ENCODE measurements at regions of chr6 and their contacts with region 1.

Region 1: DNA sequence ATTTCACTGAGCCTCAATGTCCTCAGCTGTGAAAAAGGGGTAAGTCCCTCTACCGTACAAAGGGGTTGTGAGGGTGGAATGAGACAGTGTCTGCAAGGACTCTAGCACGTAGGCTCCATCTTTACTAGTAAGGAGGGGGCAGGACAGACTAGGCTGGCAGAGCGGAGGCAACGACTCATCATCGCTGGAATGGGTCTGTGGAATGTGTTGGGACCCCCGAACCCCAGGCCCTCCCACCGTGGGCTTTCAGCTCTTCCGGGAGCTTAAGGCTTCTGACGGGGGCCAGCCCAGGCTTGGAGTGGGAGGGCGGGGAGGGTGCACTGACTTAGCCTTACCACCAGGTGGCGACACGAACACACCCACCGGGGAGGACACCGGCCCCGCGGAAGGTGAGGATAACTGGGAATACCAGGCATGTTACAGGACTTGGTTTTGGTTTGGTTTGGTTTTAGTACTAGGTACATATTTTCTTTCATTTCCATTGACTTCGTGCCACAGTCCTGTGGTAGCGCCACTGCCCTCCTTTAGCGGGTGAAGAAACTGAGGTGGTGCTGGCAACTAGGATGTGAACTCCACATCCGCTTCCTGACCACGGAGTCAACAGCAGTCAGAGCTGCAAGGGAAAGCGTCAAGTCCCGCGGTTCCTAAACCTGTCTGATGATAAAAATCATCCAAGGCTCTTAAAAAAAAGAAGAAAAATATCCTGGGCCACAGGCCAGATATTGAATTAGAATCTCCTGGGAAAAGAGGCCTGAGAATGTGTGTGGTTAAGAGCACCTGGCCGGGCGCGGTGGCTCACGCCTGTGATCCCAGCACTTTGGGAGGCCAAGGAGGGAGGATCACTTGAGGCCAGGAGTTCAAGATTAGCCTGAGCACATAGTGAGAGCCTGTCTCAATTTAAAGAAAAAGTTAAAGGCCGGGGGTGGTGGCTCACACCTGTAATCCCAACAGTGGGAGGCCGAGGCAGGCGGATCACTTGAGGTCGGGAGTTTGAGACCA is 10.3 kb upstream of the TULP1 start:
- DNase-seq: peak; percentile 59
- H3K4me3 ChIP-seq: peak overlapping the region in 1 of 3 experiments; percentile 21
- H3K27ac ChIP-seq: no peak overlapping the region
- H3K4me1 ChIP-seq: peaks cover 9% of the 10 kb centered on the region
- H3K27me3 ChIP-seq: no peaks in the 10 kb centered on the region
- CTCF ChIP-seq: peak; percentile 73 to 94

Region 2: GRCh38 chr6:35202066-35202546 is 320.9 kb before region 1 on chr6:
- CTCF ChIA-PET with region 1: no interaction called
- dilution Hi-C with region 1: no loop called
- in situ Hi-C with region 1: no loop called
- intact Hi-C with region 1: no loop called
- DNase-seq: no peak
- H3K4me3 ChIP-seq: no peak overlapping the region
- H3K27ac ChIP-seq: no peak overlapping the region
- H3K4me1 ChIP-seq: peaks cover 5% of the 10 kb centered on the region
- H3K27me3 ChIP-seq: no peaks in the 10 kb centered on the region
- CTCF ChIP-seq: no peak

Region 3: DNA sequence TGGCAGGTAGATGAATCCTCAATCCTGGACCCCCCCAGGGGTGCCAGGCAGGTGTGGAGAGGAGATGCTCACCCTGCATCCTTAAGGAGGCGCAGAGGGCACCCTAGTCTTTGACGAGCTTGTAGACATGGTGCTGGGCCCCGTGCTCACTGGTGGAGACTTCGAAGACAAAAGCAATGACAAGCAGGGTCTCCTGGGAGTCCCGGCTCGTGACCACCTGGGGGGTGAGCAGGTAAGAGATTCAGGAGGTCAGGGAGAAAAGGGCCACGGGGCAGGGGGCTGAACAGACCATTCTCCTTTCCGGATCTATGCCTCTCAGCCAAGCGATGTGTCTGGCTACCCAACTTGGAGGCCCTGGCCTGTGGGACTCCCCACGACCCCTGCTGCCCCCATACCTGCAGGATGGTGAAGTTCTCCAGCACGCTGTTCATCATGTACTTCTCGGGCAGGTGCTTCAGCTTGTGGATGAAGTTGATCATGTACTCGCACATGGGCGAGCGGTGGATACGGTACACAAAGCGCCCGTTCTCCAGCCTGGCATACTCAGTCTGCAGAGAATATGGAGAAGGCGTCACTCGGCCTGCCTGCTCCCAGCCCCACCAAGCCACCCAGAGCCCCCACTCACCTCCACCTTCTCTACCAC is 47.9 kb before region 1 on chr6:
- CTCF ChIA-PET with region 1: interaction called, 3 read pairs
- dilution Hi-C with region 1: no loop called
- in situ Hi-C with region 1: no loop called
- intact Hi-C with region 1: loop called (anchors 1 kb)
- DNase-seq: no peak
- H3K4me3 ChIP-seq: no peak overlapping the region
- H3K27ac ChIP-seq: no peak overlapping the region
- H3K4me1 ChIP-seq: peaks cover 11% of the 10 kb centered on the region
- H3K27me3 ChIP-seq: no peaks in the 10 kb centered on the region
- CTCF ChIP-seq: no peak

Region 4: DNA sequence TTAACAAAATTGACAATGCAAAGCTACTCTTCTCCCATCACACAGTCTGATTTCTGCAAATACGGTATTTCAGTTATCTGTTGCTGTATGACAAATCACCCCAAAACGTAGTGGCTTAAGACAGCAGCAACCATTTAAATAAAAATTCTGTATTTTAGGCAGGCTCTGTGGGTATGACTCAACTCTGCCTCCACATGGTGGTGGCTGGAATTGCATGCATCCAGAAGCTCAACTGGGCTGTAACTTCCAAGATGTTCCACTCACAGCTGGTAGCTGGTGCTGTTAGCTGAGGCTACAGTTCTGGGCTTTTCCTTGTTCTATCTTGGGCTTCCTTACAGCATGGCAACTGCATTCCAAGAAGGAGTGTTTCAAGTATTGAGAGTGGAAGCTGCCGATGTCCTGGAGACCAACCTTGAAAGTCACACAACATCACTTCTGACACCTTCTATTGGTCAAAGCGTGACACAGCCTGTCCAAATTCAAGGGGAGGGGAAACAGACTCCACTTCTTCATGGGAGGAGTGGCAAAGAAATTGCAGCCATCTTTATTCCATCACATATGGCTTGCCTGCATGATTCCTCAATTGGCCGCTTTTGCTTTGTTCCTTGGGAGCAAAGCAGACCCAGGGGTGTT is 29.4 kb after region 1 on chr6:
- CTCF ChIA-PET with region 1: no interaction called
- dilution Hi-C with region 1: no loop called
- in situ Hi-C with region 1: no loop called
- intact Hi-C with region 1: loop called (anchors 1 kb)
- DNase-seq: peak; percentile 29
- H3K4me3 ChIP-seq: no peak overlapping the region
- H3K27ac ChIP-seq: no peak overlapping the region
- H3K4me1 ChIP-seq: no peaks in the 10 kb centered on the region
- H3K27me3 ChIP-seq: no peaks in the 10 kb centered on the region
- CTCF ChIP-seq: peak; percentile 89 to 99

Region 5: GRCh38 chr6:35635601-35636597 is 112.9 kb after region 1 on chr6:
- CTCF ChIA-PET with region 1: no interaction called
- dilution Hi-C with region 1: no loop called
- in situ Hi-C with region 1: no loop called
- intact Hi-C with region 1: loop called (anchors 5 kb)
- DNase-seq: no peak
- H3K4me3 ChIP-seq: no peak overlapping the region
- H3K27ac ChIP-seq: no peak overlapping the region
- H3K4me1 ChIP-seq: peaks cover 5% of the 10 kb centered on the region
- H3K27me3 ChIP-seq: no peaks in the 10 kb centered on the region
- CTCF ChIP-seq: no peak

Region 6: DNA sequence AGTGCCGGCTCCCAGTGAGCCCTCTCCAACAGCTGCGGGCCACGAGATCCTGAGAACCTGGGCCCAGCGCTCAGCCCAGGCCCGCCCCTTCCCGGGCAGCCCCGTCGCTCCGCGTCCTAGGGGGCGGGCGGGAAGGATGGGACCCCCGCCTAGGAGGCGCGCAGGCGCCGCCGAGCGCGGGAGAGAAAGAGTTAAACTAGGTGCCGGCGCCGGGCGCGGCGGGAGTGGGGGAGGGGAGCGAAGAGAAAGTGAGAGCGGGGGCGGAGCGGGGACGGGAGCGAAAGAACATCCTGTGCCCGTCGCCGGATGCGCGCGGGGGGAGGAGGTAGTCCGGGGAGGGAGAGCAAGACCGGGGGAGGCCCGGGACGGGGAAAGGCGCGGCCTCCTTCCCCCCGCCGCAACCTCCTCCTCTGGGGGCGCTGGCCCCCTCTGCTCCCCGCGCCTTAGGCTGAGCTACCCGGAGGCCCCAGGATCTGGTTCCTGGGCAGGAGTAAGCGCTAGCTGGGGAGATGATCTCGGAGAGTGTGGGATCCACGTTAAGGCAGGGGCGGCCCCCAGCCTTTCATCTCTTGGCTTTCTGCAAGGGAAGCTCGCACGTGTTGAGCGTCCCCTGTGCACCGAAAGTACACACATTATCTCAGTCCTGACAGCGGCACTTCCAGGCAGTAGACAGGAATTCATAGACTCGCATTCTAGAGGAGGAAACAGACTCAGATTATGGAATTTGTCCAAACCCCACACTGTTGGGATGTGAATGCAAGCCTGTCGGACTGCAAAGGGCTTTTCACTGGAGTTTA is 209.0 kb after region 1 on chr6:
- CTCF ChIA-PET with region 1: interaction called, 11 read pairs
- dilution Hi-C with region 1: no loop called
- in situ Hi-C with region 1: loop called (anchors 5 to 10 kb)
- intact Hi-C with region 1: loop called (anchors 1 kb)
- DNase-seq: peak; percentile 87
- H3K4me3 ChIP-seq: peak overlapping the region; percentile 45 to 54 (median 48)
- H3K27ac ChIP-seq: peak overlapping the region; percentile 83
- H3K4me1 ChIP-seq: peaks cover 69% of the 10 kb centered on the region
- H3K27me3 ChIP-seq: no peaks in the 10 kb centered on the region
- CTCF ChIP-seq: no peak

Region 7: GRCh38 chr6:35757456-35758123 is 234.6 kb after region 1 on chr6:
- CTCF ChIA-PET with region 1: no interaction called
- dilution Hi-C with region 1: no loop called
- in situ Hi-C with region 1: no loop called
- intact Hi-C with region 1: loop called (anchors 5 kb)
- DNase-seq: no peak
- H3K4me3 ChIP-seq: no peak overlapping the region
- H3K27ac ChIP-seq: no peak overlapping the region
- H3K4me1 ChIP-seq: no peaks in the 10 kb centered on the region
- H3K27me3 ChIP-seq: no peaks in the 10 kb centered on the region
- CTCF ChIP-seq: peak; percentile 35 to 48

Region 8: GRCh38 chr6:36615018-36615761 is 1092.2 kb after region 1 on chr6:
- CTCF ChIA-PET with region 1: interaction called, 11 read pairs
- dilution Hi-C with region 1: no loop called
- in situ Hi-C with region 1: no loop called
- intact Hi-C with region 1: no loop called
- DNase-seq: peak; percentile 65
- H3K4me3 ChIP-seq: no peak overlapping the region
- H3K27ac ChIP-seq: no peak overlapping the region
- H3K4me1 ChIP-seq: peaks cover 15% of the 10 kb centered on the region
- H3K27me3 ChIP-seq: no peaks in the 10 kb centered on the region
- CTCF ChIP-seq: peak; percentile 82 to 83

Measured in mammary epithelial cell (primary cell).